A673 (cell line): ENCODE measurements at regions of chr21 and their contacts with region 1.

Region 1: GRCh38 chr21:20882462-20883407 is 115.5 kb upstream of the NCAM2 start:
- DNase-seq: peak; percentile 66
- H3K4me3 ChIP-seq: no peak overlapping the region
- H3K27ac ChIP-seq: no peak overlapping the region
- H3K4me1 ChIP-seq: peaks cover 10% of the 10 kb centered on the region
- H3K27me3 ChIP-seq: no peaks in the 10 kb centered on the region
- CTCF ChIP-seq: peak; percentile 73

Region 2: DNA sequence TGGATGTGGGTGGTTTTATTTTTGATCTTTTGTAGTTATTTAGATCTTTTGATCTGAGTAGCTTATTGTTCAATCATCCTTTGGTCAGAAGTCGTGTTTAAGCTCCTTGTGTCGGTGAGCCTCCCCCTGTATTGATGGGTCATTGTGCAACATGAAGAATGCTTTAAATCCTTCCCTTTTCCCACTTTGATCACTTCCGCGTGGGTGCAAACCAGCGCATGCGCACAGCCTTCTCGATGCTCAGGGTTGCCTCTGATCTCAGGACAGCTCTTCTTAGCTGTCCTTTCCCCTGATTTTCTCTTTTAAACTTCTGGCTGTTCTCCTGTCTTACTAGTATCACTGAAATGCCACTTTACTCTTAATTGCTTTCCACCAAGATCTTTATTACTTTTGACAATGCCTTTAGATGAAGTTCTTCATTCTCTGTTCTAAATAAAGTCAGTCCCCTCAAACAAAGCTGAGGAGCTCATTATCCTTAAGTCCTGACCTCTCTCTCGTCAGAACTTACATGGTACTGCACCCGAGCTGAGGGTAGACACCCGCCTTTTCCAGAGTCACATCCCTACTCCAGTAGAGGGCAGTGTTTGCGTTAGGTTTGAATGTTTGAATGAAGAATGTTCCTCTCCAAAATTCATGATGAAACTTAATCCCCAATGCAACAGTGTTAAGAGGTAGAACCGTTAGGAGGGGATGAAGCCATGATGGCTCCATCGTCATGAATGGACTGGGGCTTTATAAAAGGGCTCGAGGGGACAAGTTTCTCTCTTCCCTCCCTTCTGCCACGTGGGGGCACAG is 1931.3 kb before region 1 on chr21:
- CTCF ChIA-PET with region 1: no interaction called
- POLR2A ChIA-PET with region 1: no interaction called
- intact Hi-C with region 1: loop called (anchors 10 kb)
- DNase-seq: peak; percentile 64
- H3K4me3 ChIP-seq: no peak overlapping the region
- H3K27ac ChIP-seq: no peak overlapping the region
- H3K4me1 ChIP-seq: no peaks in the 10 kb centered on the region
- H3K27me3 ChIP-seq: no peaks in the 10 kb centered on the region
- CTCF ChIP-seq: peak; percentile 59

Region 3: DNA sequence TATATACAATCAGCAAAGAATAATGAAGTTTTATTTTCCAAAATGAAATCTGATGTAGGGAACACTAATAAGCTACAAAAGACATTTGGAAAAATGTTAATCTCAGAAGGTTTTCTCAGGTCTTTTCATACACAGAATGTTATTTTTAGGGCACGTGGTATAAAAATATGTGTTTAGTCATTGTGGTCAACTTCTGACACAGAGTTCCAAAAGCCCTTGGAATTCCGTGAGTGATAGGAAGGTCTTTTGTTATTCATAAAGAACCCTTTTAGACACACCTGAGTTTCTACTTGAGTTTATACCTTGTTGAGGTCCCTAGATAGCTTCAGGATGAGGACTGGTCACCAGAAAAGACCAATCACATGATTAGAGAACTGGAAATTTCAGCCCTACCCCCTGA is 162.1 kb before region 1 on chr21:
- CTCF ChIA-PET with region 1: no interaction called
- POLR2A ChIA-PET with region 1: no interaction called
- intact Hi-C with region 1: no loop called
- DNase-seq: no peak
- H3K4me3 ChIP-seq: no peak overlapping the region
- H3K27ac ChIP-seq: no peak overlapping the region
- H3K4me1 ChIP-seq: no peaks in the 10 kb centered on the region
- H3K27me3 ChIP-seq: no peaks in the 10 kb centered on the region
- CTCF ChIP-seq: no peak

Region 4: GRCh38 chr21:20739421-20739820 is 143.3 kb before region 1 on chr21:
- CTCF ChIA-PET with region 1: no interaction called
- POLR2A ChIA-PET with region 1: no interaction called
- intact Hi-C with region 1: loop called (anchors 10 kb)
- DNase-seq: peak; percentile 41
- H3K4me3 ChIP-seq: no peak overlapping the region
- H3K27ac ChIP-seq: no peak overlapping the region
- H3K4me1 ChIP-seq: no peaks in the 10 kb centered on the region
- H3K27me3 ChIP-seq: no peaks in the 10 kb centered on the region
- CTCF ChIP-seq: peak; percentile 51

Region 5: DNA sequence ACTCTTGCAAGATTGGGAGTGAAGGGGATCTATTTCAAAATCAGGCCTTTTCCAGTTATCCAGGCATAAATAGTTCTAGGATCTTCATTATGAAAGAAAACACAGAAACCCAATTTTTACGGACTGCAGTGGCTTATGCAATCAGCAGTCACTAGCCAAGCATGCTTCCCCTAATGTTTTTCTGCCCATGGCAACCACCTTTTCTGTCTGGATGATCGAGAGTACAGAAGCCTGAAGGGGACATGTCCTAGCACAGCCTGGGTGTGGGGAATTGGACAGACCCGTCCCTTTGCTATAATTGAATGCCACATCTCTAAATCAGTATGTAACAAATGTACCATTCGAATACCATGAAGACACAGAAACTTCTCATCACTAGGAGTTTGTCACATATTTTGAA is 85.7 kb after region 1 on chr21:
- CTCF ChIA-PET with region 1: no interaction called
- POLR2A ChIA-PET with region 1: no interaction called
- intact Hi-C with region 1: loop called (anchors 5 kb)
- DNase-seq: peak; percentile 23
- H3K4me3 ChIP-seq: no peak overlapping the region
- H3K27ac ChIP-seq: no peak overlapping the region
- H3K4me1 ChIP-seq: peaks cover 6% of the 10 kb centered on the region
- H3K27me3 ChIP-seq: no peaks in the 10 kb centered on the region
- CTCF ChIP-seq: no peak